Activated naive CD4-positive, alpha-beta T cell treated with anti-CD3 and anti-CD28 coated beads for 36 hours (primary cell): ENCODE measurements at regions of chr7 and their contacts with region 1.

Region 1: DNA sequence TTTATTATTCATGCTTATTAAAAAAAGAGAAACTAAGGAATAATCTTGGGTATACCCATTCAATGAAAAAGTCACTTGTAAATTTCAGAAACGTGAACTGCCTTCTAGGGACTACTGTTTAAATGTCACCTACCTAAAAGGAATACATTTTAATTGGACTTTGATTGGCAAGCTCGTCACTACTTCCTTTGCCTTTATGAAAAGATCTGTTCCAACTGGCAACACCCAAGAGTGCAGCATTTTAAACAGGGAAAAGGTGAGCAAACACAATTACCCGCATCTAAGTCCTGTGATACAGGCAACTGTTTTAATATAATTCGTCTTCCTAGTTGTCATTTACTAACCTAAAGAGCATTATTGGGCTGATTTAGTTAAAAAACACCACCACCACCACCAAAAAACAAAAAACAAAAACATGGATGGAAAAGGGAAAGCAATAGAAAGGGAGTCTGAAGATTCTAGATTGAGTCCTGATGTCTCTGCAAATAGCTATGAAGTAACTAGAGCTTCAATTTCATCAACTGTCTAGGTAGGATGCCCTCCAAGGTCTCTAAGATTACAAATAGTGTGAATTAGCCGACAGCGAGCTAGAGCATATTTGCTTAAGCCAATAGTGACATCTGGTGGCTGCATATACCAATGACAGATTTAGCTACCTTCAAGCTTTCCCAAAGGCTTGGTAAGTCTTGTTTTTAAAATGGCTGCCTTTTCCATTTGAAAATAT is 33.8 kb upstream of the ICA1 start:
- DNase-seq: peak; percentile 43
- H3K4me3 Mint-ChIP-seq: no peak overlapping the region
- H3K27ac Mint-ChIP-seq: no peak overlapping the region
- H3K4me1 Mint-ChIP-seq: peaks cover 3% of the 10 kb centered on the region
- H3K27me3 Mint-ChIP-seq: peaks cover 3% of the 10 kb centered on the region

Region 2: DNA sequence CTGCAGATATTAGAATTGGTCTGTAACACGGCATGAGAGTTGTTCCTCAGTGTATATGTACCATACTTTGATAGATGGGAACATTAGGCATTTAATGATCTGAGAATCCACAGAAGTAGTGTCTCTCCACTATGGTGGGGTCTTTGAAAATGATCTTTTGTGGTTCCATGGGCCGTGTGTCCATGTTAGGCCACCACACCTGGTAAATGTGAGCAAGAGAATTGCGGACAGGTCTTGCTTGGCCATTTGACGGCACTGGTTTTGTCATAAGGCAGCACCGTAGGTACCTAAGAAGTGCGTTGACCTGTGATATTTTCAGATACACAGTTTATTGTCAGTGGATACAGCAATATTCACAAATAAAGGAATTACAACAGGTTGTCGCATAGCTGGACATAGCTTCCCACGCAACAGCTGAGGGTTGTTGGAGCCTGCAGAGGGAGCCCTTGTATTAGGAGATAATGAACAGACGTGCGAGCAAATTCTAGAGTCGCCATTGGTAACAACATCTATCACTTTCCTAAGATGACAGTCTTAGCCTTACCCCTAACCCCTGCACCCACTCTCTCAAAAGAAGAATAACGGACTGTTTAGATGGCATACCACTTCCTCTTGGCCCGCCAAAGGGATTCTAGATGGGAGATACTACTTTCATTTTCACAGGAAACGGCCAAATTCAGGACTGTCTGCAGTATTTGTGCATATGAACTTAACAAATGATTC is 871.5 kb before region 1 on chr7:
- CTCF ChIA-PET with region 1: no interaction called
- intact Hi-C with region 1: loop called (anchors 2 kb)
- DNase-seq: peak; percentile 52
- H3K4me3 Mint-ChIP-seq: peak overlapping the region; percentile 42
- H3K27ac Mint-ChIP-seq: no peak overlapping the region
- H3K4me1 Mint-ChIP-seq: no peaks in the 10 kb centered on the region
- H3K27me3 Mint-ChIP-seq: no peaks in the 10 kb centered on the region

Region 3: DNA sequence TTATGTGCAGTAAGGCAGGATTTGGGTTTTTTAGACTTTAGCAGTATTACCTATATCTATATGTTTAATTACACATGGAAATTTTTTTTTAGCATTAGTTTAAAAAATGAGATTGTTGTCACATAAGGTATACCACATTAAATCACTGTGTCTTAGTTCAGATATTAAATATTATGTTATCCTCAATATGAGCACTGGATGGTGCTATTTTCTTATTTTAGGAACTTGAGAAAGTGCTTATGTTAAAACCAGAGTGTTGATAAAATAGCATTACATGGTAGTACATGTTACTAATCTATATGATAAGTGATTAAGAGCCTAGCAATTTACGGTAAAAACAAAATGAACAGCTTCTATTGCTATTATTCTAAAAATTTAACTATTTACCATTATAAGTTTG is 700.3 kb before region 1 on chr7:
- CTCF ChIA-PET with region 1: no interaction called
- intact Hi-C with region 1: loop called (anchors 1 kb)
- DNase-seq: no peak
- H3K4me3 Mint-ChIP-seq: no peak overlapping the region
- H3K27ac Mint-ChIP-seq: no peak overlapping the region
- H3K4me1 Mint-ChIP-seq: peaks cover 3% of the 10 kb centered on the region
- H3K27me3 Mint-ChIP-seq: no peaks in the 10 kb centered on the region

Region 4: DNA sequence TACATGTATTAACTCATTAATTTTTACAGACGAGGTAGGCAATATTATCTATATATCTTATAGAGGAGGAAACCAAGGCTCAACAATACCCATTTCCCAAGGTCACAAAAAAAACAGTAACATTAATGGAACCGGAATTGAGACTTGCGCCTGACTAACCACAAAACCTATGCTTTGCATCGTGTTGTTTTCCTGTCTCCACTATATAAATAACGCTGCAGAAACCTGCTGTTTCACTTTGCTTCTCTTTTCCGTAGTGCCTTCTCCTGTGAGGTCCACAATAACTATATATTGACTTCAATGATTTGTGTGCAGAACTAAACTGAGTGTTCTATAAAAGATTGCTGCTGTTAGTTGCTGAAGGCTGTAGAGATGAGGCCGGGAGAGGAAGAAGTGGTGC is 479.7 kb before region 1 on chr7:
- CTCF ChIA-PET with region 1: no interaction called
- intact Hi-C with region 1: loop called (anchors 10 kb)
- DNase-seq: peak; percentile 14
- H3K4me3 Mint-ChIP-seq: no peak overlapping the region
- H3K27ac Mint-ChIP-seq: no peak overlapping the region
- H3K4me1 Mint-ChIP-seq: peaks cover 32% of the 10 kb centered on the region
- H3K27me3 Mint-ChIP-seq: no peaks in the 10 kb centered on the region

Region 5: GRCh38 chr7:8073700-8074099 is 222.1 kb before region 1 on chr7:
- CTCF ChIA-PET with region 1: no interaction called
- intact Hi-C with region 1: no loop called
- DNase-seq: no peak
- H3K4me3 Mint-ChIP-seq: no peak overlapping the region
- H3K27ac Mint-ChIP-seq: no peak overlapping the region
- H3K4me1 Mint-ChIP-seq: peaks cover 8% of the 10 kb centered on the region
- H3K27me3 Mint-ChIP-seq: no peaks in the 10 kb centered on the region

Region 6: DNA sequence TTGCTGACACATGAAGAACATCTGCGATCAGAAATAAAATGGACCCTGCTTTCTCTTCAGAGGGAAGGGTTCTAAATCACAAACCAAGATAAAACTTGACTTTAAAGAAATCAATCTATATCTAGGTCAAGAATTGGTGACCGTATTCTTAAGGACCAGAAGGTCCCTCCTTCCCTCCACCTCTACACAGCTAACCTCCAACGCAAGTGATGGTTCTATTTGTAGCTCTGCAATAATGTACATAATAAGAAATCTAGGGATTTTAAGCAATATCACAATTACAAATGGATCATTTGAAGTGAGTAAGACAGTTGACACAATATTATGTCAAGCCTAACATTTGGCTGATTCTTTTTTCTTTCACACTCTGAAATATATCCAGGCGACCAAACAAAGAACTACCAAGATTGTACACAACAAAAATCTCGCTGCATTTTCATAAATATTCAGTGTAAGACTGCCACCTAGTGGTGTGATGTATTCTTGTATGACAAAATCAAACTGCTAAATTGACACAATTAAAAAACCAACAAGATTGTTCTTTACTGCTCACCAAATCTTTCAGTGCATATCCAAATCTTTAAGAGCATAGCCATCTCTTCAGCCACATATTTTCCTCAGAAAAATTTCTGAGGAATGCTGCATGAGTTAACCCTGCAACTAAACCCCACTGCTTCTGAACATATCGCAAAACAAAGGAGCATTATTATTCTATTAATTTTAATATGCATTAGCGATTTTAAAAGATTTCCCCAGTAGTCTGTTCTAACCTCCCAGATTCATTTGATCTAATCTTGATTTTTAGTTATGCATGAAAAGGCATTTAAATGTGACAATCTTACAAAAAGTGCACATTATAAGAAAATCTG is 78.4 kb before region 1 on chr7:
- CTCF ChIA-PET with region 1: interaction called, 6 read pairs
- intact Hi-C with region 1: loop called (anchors 1 kb)
- DNase-seq: peak; percentile 8
- H3K4me3 Mint-ChIP-seq: no peak overlapping the region
- H3K27ac Mint-ChIP-seq: no peak overlapping the region
- H3K4me1 Mint-ChIP-seq: peaks cover 2% of the 10 kb centered on the region
- H3K27me3 Mint-ChIP-seq: no peaks in the 10 kb centered on the region

Region 7: DNA sequence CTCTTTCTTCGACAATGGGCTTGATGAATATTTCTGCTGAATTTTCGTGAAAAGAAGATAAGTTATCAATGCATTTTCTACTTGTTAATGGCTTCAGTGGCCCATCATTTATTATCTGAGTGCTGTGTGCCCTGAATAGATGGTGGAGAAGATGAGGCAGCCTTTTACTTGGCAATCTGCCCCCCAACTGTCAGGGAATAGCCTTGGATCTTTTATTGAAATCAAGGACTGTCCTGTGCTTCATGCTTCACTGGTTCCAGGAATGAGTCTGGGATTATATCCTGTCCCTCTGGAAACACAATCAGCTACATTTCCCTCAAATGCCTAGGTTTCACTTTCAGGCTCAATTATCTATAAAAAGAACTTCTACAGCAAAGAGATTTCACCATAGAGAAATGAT is 61.7 kb after region 1 on chr7:
- CTCF ChIA-PET with region 1: no interaction called
- intact Hi-C with region 1: no loop called
- DNase-seq: no peak
- H3K4me3 Mint-ChIP-seq: no peak overlapping the region
- H3K27ac Mint-ChIP-seq: no peak overlapping the region
- H3K4me1 Mint-ChIP-seq: no peaks in the 10 kb centered on the region
- H3K27me3 Mint-ChIP-seq: peaks cover 14% of the 10 kb centered on the region